ENCODE measurements at regions of chr1 and their contacts with region 1.

Region 1: DNA sequence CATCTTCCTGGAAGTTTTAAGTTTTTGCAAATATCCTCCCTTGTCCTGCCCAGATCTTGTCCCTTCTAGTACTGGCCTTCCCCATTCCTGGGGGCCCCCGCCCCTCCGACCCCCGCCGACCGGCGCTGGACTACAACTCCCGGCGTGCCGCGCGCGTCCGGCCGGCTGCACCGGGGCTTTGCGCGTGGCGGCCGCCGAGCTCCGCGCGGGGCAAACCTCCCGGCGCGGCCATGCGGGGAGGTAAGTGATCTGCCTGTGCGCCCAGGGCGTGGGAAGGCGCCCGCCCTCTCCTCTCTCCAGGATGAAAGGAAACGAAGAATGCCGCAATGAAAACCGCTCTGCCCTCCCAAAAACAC is 3.2 kb upstream of the SAMD13 start:
- DNase-seq: peak; percentile 12 to 75 (median 41)
- ATAC-seq: peak; percentile 70
- H3K4me3 ChIP-seq: peak overlapping the region; percentile 76 to 94
- H3K4me3 Mint-ChIP-seq: peak overlapping the region; percentile 78
- H3K27ac ChIP-seq: peak overlapping the region; percentile 8 to 53
- H3K27ac Mint-ChIP-seq: peak overlapping the region; percentile 46
- H3K4me1 ChIP-seq: peaks cover 17% of the 10 kb centered on the region
- H3K4me1 Mint-ChIP-seq: peaks cover 37% of the 10 kb centered on the region
- H3K27me3 ChIP-seq: no peaks in the 10 kb centered on the region
- H3K27me3 Mint-ChIP-seq: peaks cover 5% of the 10 kb centered on the region
- CTCF ChIP-seq: no peak

Region 2: GRCh38 chr1:84217239-84217638 is 81.1 kb before region 1 on chr1:
- CTCF ChIA-PET with region 1: interaction called, 3 read pairs
- POLR2A ChIA-PET with region 1: no interaction called
- intact Hi-C with region 1: loop called in 1 of 2 experiments (anchors 5 kb)
- DNase-seq: no peak
- ATAC-seq: no peak
- H3K4me3 ChIP-seq: no peak overlapping the region
- H3K4me3 Mint-ChIP-seq: no peak overlapping the region
- H3K27ac ChIP-seq: no peak overlapping the region
- H3K27ac Mint-ChIP-seq: peak overlapping the region; percentile 15
- H3K4me1 ChIP-seq: peaks cover 12% of the 10 kb centered on the region
- H3K4me1 Mint-ChIP-seq: peaks cover 54% of the 10 kb centered on the region
- H3K27me3 ChIP-seq: no peaks in the 10 kb centered on the region
- H3K27me3 Mint-ChIP-seq: no peaks in the 10 kb centered on the region
- CTCF ChIP-seq: no peak

Region 3: GRCh38 chr1:84573967-84574842 is 275.9 kb after region 1 on chr1 and contains the start of gene CTBS:
- CTCF ChIA-PET with region 1: no interaction called
- POLR2A ChIA-PET with region 1: no interaction called
- intact Hi-C with region 1: loop called in 1 of 2 experiments (anchors 5 kb)
- DNase-seq: peak; percentile 67 to 93 (median 85)
- ATAC-seq: peak; percentile 91
- H3K4me3 ChIP-seq: peak within 1 kb of the TSS; percentile 81 to 92
- H3K4me3 Mint-ChIP-seq: peak within 1 kb of the TSS; percentile 96
- H3K27ac ChIP-seq: peak within 1 kb of the TSS; percentile 94 to 96
- H3K27ac Mint-ChIP-seq: peak within 1 kb of the TSS; percentile 99
- H3K4me1 ChIP-seq: peaks cover 20% of the 10 kb centered on the region
- H3K4me1 Mint-ChIP-seq: peaks cover 42% of the 10 kb centered on the region
- H3K27me3 ChIP-seq: no peaks in the 10 kb centered on the region
- H3K27me3 Mint-ChIP-seq: no peaks in the 10 kb centered on the region
- CTCF ChIP-seq: no peak
- total RNA-seq, gene CTBS: 17.3 to 19.7 TPM

Measured in CD8-positive, alpha-beta T cell (primary cell).